ENCODE measurements at regions of chr19 and their contacts with region 1.

Region 1: GRCh38 chr19:49468746-49469447 is 5.1 kb upstream of the FLT3LG start:
- DNase-seq: peak; percentile 97
- ATAC-seq: peak; percentile 80
- H3K4me3 ChIP-seq: no peak overlapping the region
- H3K27ac ChIP-seq: peak overlapping the region; percentile 33; the same call in 1 of the 2 replicates
- H3K4me1 ChIP-seq: peaks cover 37% of the 10 kb centered on the region
- H3K27me3 ChIP-seq: no peaks in the 10 kb centered on the region
- CTCF ChIP-seq: no peak
- EP300 ChIP-seq: peak in 1 of 2 experiments; percentile 66; a peak in 1 of 4 replicates
- POLR2A ChIP-seq: no peak
- RAD21 ChIP-seq: no peak

Region 2: DNA sequence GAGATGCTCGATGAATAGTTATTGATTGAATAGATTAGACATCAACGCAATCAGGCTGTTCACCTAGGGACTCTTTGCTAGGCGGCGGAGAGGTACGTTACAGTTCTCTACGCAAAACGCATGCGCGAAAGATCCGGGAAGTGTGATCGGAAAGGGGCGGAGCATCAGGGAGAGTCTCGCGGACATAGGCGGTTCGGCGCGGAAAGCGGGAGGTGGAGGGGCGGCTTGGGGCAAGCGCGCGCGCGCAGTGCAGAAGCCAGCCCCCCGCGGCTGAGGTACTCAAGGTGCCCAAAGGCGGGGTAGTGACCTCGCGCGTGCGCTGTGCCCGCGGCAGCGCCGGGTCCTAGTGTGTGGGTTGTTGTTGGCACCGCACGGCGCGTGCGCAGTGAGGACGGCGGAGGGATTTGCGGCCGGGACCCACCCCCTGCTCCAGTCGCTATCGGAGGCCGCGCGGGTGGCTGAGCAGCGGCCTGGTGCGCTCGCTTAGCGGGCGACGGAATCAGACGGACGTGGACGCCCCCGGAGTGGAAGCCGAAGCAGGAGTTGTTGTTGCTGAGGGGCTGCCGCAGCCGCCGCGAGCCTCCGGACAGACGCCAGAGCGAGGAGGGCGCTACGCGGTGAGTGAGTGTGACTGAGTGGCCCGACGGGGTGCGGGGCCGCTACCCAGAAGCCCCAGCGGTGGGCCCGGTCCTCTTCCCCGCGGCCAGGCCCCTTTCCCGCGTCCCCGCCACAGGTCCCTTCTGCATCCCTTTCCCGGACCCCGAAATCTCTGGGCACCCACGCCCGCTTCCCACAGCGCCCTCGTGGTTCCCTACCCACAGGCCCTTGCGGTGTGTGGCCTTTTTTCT is 383.7 kb before region 1 on chr19 and contains the start of gene SNRNP70:
- CTCF ChIA-PET with region 1: no interaction called
- POLR2A ChIA-PET with region 1: no interaction called
- RAD21 ChIA-PET with region 1: no interaction called
- SMC1A ChIA-PET with region 1: no interaction called
- in situ Hi-C with region 1: no loop called
- intact Hi-C with region 1: no loop called
- DNase-seq: peak; percentile 94
- ATAC-seq: peak; percentile 97
- H3K4me3 ChIP-seq: peak within 1 kb of the TSS; percentile 89
- H3K27ac ChIP-seq: peak within 1 kb of the TSS; percentile 87
- H3K4me1 ChIP-seq: peaks cover 4% of the 10 kb centered on the region; the same call in 1 of the 2 replicates
- H3K27me3 ChIP-seq: no peaks in the 10 kb centered on the region
- CTCF ChIP-seq: no peak
- EP300 ChIP-seq: no peak
- POLR2A ChIP-seq: peak; percentile 100
- RAD21 ChIP-seq: no peak
- polyA plus RNA-seq, gene SNRNP70: 2.7 to 14.9 TPM

Region 3: GRCh38 chr19:49301165-49301865 is 167.6 kb before region 1 on chr19:
- CTCF ChIA-PET with region 1: interaction called, 12 read pairs
- POLR2A ChIA-PET with region 1: no interaction called
- RAD21 ChIA-PET with region 1: no interaction called
- SMC1A ChIA-PET with region 1: interaction called, 3 read pairs
- in situ Hi-C with region 1: no loop called
- intact Hi-C with region 1: no loop called
- DNase-seq: peak; percentile 40
- ATAC-seq: peak; percentile 100
- H3K4me3 ChIP-seq: no peak overlapping the region
- H3K27ac ChIP-seq: no peak overlapping the region
- H3K4me1 ChIP-seq: no peaks in the 10 kb centered on the region; the same call in 1 of the 2 replicates
- H3K27me3 ChIP-seq: no peaks in the 10 kb centered on the region
- CTCF ChIP-seq: peak; percentile 88 to 96 (median 96); a peak in 5 of 6 replicates
- EP300 ChIP-seq: no peak
- POLR2A ChIP-seq: no peak
- RAD21 ChIP-seq: peak; percentile 49

Region 4: DNA sequence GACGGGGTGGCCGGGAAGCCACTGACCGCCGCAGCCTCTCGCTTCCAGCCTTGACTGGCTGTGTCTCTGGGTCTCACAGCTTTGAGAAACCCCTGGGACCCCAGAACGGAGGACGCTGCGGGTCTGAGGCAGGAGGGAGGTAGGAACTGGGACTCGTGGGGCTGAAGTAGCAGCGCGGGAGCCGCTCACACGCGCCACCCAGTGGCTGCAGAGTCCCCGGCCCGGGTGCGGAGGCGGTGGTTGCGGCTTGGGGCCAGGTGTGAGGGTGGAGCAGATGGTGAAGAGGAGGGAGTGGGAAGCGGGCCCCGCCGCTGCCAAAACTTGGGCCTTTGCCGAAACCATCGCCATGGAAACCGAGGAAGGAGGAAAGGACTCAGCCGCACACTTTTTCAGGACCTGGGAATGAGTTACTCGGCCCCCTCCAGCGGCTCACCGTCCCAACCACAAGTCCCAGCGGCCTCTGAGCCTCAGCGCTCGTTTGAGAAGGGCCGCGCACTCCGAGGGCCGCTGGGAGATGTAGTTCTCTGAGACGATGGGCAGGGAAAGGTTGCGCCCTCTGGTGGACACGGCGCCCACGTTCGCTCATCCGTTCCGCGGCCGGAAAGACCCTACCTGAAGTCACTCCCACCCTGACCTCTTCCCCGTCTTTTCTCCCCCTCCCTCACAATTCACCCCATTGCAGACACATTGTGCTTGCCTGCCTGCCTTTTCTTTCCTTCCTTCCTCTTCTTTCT is 25.4 kb before region 1 on chr19:
- CTCF ChIA-PET with region 1: interaction called, 29 read pairs
- POLR2A ChIA-PET with region 1: interaction called, 9 read pairs
- RAD21 ChIA-PET with region 1: interaction called, 7 read pairs
- SMC1A ChIA-PET with region 1: interaction called, 11 read pairs
- in situ Hi-C with region 1: no loop called
- intact Hi-C with region 1: loop called (anchors 1 kb)
- DNase-seq: peak; percentile 80
- ATAC-seq: peak; percentile 92
- H3K4me3 ChIP-seq: peak overlapping the region; percentile 81
- H3K27ac ChIP-seq: peak overlapping the region; percentile 21; the same call in 1 of the 2 replicates
- H3K4me1 ChIP-seq: no peaks in the 10 kb centered on the region
- H3K27me3 ChIP-seq: peaks cover 9 to 20% of the 10 kb centered on the region in 2 experiments
- CTCF ChIP-seq: peak; percentile 70 to 92 (median 90)
- EP300 ChIP-seq: no peak
- POLR2A ChIP-seq: no peak
- RAD21 ChIP-seq: peak; percentile 78

Region 5: GRCh38 chr19:49451430-49452181 is 17.3 kb before region 1 on chr19 and contains the start of gene PIH1D1:
- CTCF ChIA-PET with region 1: interaction called, 46 read pairs
- POLR2A ChIA-PET with region 1: interaction called, 81 read pairs
- RAD21 ChIA-PET with region 1: interaction called, 90 read pairs
- SMC1A ChIA-PET with region 1: interaction called, 53 read pairs
- in situ Hi-C with region 1: no loop called
- intact Hi-C with region 1: loop called (anchors 1 kb)
- DNase-seq: peak; percentile 99
- ATAC-seq: peak; percentile 77
- H3K4me3 ChIP-seq: peak within 1 kb of the TSS; percentile 85
- H3K27ac ChIP-seq: peak within 1 kb of the TSS; percentile 100
- H3K4me1 ChIP-seq: peaks cover 12% of the 10 kb centered on the region
- H3K27me3 ChIP-seq: no peaks in the 10 kb centered on the region
- CTCF ChIP-seq: no peak
- EP300 ChIP-seq: no peak
- POLR2A ChIP-seq: peak; percentile 80
- RAD21 ChIP-seq: no peak
- polyA plus RNA-seq, gene PIH1D1: 16.1 to 39.9 TPM

Region 6: GRCh38 chr19:49458567-49458903 is 10.4 kb before region 1 on chr19:
- CTCF ChIA-PET with region 1: interaction called, 46 read pairs
- POLR2A ChIA-PET with region 1: interaction called, 81 read pairs
- RAD21 ChIA-PET with region 1: interaction called, 90 read pairs
- SMC1A ChIA-PET with region 1: interaction called, 53 read pairs
- in situ Hi-C with region 1: no loop called
- intact Hi-C with region 1: no loop called
- DNase-seq: no peak
- ATAC-seq: peak; percentile 76
- H3K4me3 ChIP-seq: no peak overlapping the region
- H3K27ac ChIP-seq: peak overlapping the region; percentile 82
- H3K4me1 ChIP-seq: peaks cover 25% of the 10 kb centered on the region
- H3K27me3 ChIP-seq: no peaks in the 10 kb centered on the region
- CTCF ChIP-seq: no peak
- EP300 ChIP-seq: no peak
- POLR2A ChIP-seq: no peak
- RAD21 ChIP-seq: no peak